ENCODE measurements at regions of chr5 and their contacts with region 1.

Region 1: GRCh38 chr5:317086-317811 is 4.3 kb upstream of the AHRR start:
- DNase-seq: peak; percentile 50 to 86
- H3K4me3 ChIP-seq: no peak overlapping the region
- H3K27ac ChIP-seq: no peak overlapping the region
- H3K4me1 ChIP-seq: peaks cover 0 to 19% (median under 1%) of the 10 kb centered on the region in 4 experiments; a peak in 5 of 7 replicates
- H3K27me3 ChIP-seq: peaks cover 28 to 38% (median 35%) of the 10 kb centered on the region in 4 experiments
- CTCF ChIP-seq: peak in 2 of 3 experiments; percentile 92; a peak in 3 of 4 replicates
- EP300 ChIP-seq: no peak; a peak in 1 of 3 replicates
- POLR2A ChIP-seq: no peak
- RAD21 ChIP-seq: peak; percentile 95 to 97

Region 2: GRCh38 chr5:285639-286557 is 31.4 kb before region 1 on chr5:
- CTCF ChIA-PET with region 1: interaction called, 16 read pairs
- POLR2A ChIA-PET with region 1: no interaction called
- DNase-seq: no peak
- H3K4me3 ChIP-seq: no peak overlapping the region
- H3K27ac ChIP-seq: no peak overlapping the region
- H3K4me1 ChIP-seq: no peaks in the 10 kb centered on the region
- H3K27me3 ChIP-seq: no peaks in the 10 kb centered on the region
- CTCF ChIP-seq: no peak
- EP300 ChIP-seq: no peak
- POLR2A ChIP-seq: no peak
- RAD21 ChIP-seq: no peak

Measured in H1 (cell line).